ENCODE measurements at regions of chr5 and their contacts with region 1.

Region 1: DNA sequence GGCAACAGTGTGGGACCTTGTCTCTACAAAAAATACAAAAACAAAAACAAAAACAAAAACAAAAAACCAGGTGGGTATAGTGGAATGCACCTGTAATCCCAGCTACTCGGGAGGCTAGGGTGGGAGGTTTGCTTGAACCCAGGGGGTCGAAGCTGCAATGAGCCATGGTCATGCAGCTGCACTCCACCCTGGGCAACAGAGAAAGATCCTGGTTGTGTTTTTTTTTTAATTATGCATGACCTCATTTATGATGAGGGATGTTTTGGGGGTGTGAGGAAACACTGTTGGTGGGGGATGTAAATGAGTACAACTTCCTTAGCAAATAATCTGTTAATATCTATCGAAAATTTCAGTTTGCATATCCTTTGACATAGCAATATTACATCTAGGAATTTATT is 29.4 kb upstream of the UBE2D2 start:
- DNase-seq: no peak
- ATAC-seq: no peak
- H3K4me3 ChIP-seq: no peak overlapping the region
- H3K4me3 Mint-ChIP-seq: no peak overlapping the region
- H3K27ac ChIP-seq: no peak overlapping the region
- H3K27ac Mint-ChIP-seq: no peak overlapping the region
- H3K4me1 ChIP-seq: no peaks in the 10 kb centered on the region
- H3K4me1 Mint-ChIP-seq: peaks cover under 1% of the 10 kb centered on the region
- H3K27me3 ChIP-seq: no peaks in the 10 kb centered on the region
- H3K27me3 Mint-ChIP-seq: no peaks in the 10 kb centered on the region
- CTCF ChIP-seq: no peak

Region 2: GRCh38 chr5:139733289-139733688 is 201.5 kb after region 1 on chr5:
- CTCF ChIA-PET with region 1: no interaction called
- POLR2A ChIA-PET with region 1: interaction called, 15 read pairs
- intact Hi-C with region 1: no loop called
- DNase-seq: no peak
- ATAC-seq: no peak
- H3K4me3 ChIP-seq: no peak overlapping the region
- H3K4me3 Mint-ChIP-seq: no peak overlapping the region
- H3K27ac ChIP-seq: no peak overlapping the region
- H3K27ac Mint-ChIP-seq: no peak overlapping the region
- H3K4me1 ChIP-seq: no peaks in the 10 kb centered on the region
- H3K4me1 Mint-ChIP-seq: no peaks in the 10 kb centered on the region
- H3K27me3 ChIP-seq: no peaks in the 10 kb centered on the region
- H3K27me3 Mint-ChIP-seq: no peaks in the 10 kb centered on the region
- CTCF ChIP-seq: no peak

Region 3: DNA sequence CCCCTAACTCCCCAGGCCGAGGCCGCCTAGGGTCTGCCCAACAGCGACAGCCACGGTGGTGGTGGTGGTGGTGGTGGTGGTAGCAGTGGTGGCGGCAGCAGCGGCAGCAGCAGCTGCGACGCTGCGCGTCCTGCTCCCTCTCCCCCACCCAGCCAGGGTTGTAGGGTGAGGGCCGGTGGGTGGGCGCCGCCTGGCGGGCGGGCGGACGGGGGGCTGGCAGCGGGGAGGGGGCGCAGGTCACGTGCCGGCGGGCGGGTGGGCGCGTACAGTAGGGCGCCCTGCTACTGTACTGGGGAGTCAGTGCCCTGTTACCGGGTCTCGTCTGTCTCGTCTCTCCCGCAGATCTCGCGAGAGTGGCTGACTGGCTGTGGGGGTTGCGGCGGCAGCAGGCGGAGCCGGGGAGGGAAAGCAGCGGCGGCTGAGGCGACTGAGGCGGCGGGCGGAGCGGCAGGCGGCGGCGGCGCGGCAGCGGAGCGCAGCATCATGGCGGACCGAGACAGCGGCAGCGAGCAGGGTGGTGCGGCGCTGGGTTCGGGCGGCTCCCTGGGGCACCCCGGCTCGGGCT is 582.0 kb after region 1 on chr5 and contains the start of gene PURA:
- CTCF ChIA-PET with region 1: no interaction called
- POLR2A ChIA-PET with region 1: no interaction called
- intact Hi-C with region 1: no loop called
- DNase-seq: peak; percentile 96
- ATAC-seq: peak; percentile 91
- H3K4me3 ChIP-seq: peak within 1 kb of the TSS; percentile 49 to 82 (median 78)
- H3K4me3 Mint-ChIP-seq: peak within 1 kb of the TSS; percentile 98
- H3K27ac ChIP-seq: peak within 1 kb of the TSS; percentile 72 to 87
- H3K27ac Mint-ChIP-seq: peak within 1 kb of the TSS; percentile 99
- H3K4me1 ChIP-seq: peaks cover 40 to 58% of the 10 kb centered on the region in 2 donors
- H3K4me1 Mint-ChIP-seq: peaks cover 71% of the 10 kb centered on the region
- H3K27me3 ChIP-seq: peaks cover 5 to 19% (median 11%) of the 10 kb centered on the region in 4 experiments
- H3K27me3 Mint-ChIP-seq: peaks cover 11% of the 10 kb centered on the region
- CTCF ChIP-seq: peak; percentile 17
- total RNA-seq, gene PURA: 23.5 and 26.0 TPM in 2 replicates

Region 4: DNA sequence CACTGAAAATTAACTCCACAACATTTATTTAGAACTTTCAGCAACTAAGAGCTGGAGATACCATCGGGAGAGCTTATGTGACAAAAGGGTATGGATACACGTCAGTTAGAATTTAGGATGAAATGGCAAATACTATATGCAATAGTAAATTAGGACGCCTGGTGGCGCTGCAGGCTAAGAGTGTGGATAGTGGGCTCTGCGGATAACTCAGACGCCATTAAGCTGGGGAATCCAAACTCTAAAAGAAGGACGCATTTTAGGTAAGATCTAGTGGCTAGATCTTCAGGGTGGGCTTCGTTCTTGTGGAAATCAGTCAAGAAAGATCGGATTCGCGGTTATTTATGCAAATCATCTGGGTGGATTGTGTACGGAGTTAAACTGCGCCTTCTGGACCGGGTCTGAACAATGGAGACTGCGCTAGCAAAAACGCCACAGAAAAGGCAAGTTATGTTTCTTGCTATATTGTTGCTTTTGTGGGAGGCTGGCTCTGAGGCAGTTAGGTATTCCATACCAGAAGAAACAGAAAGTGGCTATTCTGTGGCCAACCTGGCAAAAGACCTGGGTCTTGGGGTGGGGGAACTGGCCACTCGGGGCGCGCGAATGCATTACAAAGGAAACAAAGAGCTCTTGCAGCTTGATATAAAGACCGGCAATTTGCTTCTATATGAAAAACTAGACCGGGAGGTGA is 1603.4 kb after region 1 on chr5 and contains the start of gene PCDHB5:
- CTCF ChIA-PET with region 1: no interaction called
- POLR2A ChIA-PET with region 1: no interaction called
- intact Hi-C with region 1: no loop called
- DNase-seq: no peak
- ATAC-seq: no peak
- H3K4me3 ChIP-seq: no peak within 1 kb of the TSS
- H3K4me3 Mint-ChIP-seq: peak within 1 kb of the TSS; percentile 29
- H3K27ac ChIP-seq: no peak within 1 kb of the TSS
- H3K27ac Mint-ChIP-seq: no peak within 1 kb of the TSS
- H3K4me1 ChIP-seq: no peaks in the 10 kb centered on the region
- H3K4me1 Mint-ChIP-seq: no peaks in the 10 kb centered on the region
- H3K27me3 ChIP-seq: peaks cover 0 to 13% (median 6%) of the 10 kb centered on the region in 4 experiments
- H3K27me3 Mint-ChIP-seq: peaks cover 6% of the 10 kb centered on the region
- CTCF ChIP-seq: no peak
- total RNA-seq, gene PCDHB5: not detected in 2 replicates